ENCODE measurements at regions of chr18 and their contacts with region 1.

Region 1: DNA sequence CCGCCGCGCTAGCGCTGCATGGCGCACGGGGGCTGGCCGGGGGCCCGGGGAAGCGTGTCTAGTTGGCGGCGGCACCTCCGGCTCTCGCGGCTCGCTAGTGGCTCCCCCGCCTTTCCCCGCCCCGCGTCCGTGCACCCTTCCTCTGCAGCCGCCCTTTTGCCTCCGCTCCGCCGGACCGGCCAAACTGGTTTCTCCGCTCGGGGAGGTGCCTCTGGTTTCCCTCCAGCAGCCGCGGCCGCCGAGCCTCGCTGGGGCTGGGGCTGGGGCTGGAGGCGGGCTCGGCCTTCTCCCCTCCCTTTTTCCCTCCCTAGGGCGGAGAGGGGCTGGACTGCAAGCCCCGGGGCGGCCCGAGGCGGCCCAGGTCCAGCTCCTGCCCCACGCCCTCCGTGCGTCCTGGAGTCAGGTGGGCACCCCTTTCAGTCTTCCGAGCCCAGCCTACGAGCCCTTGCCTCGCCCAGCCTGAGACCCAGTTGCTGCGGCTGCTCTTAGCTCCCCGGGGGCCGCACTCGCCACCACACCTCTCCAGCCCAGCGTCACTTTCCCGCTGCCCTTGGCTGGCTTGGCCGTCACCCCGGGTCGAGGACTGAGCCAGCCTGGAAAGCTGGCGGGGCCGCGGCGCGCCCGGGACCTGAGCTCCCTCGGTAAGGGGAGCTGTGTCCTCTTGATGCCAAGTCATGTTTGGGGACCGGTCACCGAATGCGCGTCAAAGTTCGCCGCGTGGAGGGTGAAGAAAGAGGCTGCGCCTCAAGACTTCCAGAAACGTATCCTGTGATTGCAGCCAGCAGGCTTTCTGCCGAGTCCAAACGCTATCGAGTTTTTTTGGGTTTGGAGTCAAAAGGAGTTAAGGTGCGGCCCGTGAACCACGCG is at the start of gene ATP8B1:
- DNase-seq: no peak
- ATAC-seq: peak; percentile 85
- H3K4me3 ChIP-seq: peak within 1 kb of the TSS; percentile 61 to 88 (median 76)
- H3K27ac ChIP-seq: no peak within 1 kb of the TSS
- H3K4me1 ChIP-seq: peaks cover 43% of the 10 kb centered on the region
- H3K27me3 ChIP-seq: peaks cover 2 to 10% of the 10 kb centered on the region in 2 experiments; a peak in 2 of 5 replicates
- CTCF ChIP-seq: no peak
- EP300 ChIP-seq: no peak
- POLR2A ChIP-seq: peak in 1 of 2 experiments; percentile 43; a peak in 1 of 4 replicates
- RAD21 ChIP-seq: peak; percentile 6; the same call in 1 of the 2 replicates
- total RNA-seq, gene ATP8B1: 3.7 and 4.0 TPM in 2 replicates

Region 2: GRCh38 chr18:57782049-57782448 is 21.3 kb before region 1 on chr18:
- CTCF ChIA-PET with region 1: no interaction called
- POLR2A ChIA-PET with region 1: interaction called, 6 read pairs
- in situ Hi-C with region 1: no loop called
- intact Hi-C with region 1: loop called (anchors 1 kb)
- DNase-seq: no peak
- ATAC-seq: no peak
- H3K4me3 ChIP-seq: no peak overlapping the region
- H3K27ac ChIP-seq: no peak overlapping the region
- H3K4me1 ChIP-seq: peaks cover 48% of the 10 kb centered on the region
- H3K27me3 ChIP-seq: no peaks in the 10 kb centered on the region
- CTCF ChIP-seq: no peak
- EP300 ChIP-seq: no peak
- POLR2A ChIP-seq: no peak
- RAD21 ChIP-seq: no peak

Region 3: GRCh38 chr18:57859314-57859713 is 56.0 kb after region 1 on chr18:
- CTCF ChIA-PET with region 1: no interaction called
- POLR2A ChIA-PET with region 1: no interaction called
- in situ Hi-C with region 1: no loop called
- intact Hi-C with region 1: loop called (anchors 10 kb)
- DNase-seq: peak; percentile 44
- ATAC-seq: peak; percentile 94
- H3K4me3 ChIP-seq: no peak overlapping the region
- H3K27ac ChIP-seq: no peak overlapping the region
- H3K4me1 ChIP-seq: no peaks in the 10 kb centered on the region
- H3K27me3 ChIP-seq: no peaks in the 10 kb centered on the region
- CTCF ChIP-seq: peak; percentile 76
- EP300 ChIP-seq: no peak
- POLR2A ChIP-seq: no peak
- RAD21 ChIP-seq: peak; percentile 58